ENCODE measurements at regions of chrX and their contacts with region 1.

Region 1: DNA sequence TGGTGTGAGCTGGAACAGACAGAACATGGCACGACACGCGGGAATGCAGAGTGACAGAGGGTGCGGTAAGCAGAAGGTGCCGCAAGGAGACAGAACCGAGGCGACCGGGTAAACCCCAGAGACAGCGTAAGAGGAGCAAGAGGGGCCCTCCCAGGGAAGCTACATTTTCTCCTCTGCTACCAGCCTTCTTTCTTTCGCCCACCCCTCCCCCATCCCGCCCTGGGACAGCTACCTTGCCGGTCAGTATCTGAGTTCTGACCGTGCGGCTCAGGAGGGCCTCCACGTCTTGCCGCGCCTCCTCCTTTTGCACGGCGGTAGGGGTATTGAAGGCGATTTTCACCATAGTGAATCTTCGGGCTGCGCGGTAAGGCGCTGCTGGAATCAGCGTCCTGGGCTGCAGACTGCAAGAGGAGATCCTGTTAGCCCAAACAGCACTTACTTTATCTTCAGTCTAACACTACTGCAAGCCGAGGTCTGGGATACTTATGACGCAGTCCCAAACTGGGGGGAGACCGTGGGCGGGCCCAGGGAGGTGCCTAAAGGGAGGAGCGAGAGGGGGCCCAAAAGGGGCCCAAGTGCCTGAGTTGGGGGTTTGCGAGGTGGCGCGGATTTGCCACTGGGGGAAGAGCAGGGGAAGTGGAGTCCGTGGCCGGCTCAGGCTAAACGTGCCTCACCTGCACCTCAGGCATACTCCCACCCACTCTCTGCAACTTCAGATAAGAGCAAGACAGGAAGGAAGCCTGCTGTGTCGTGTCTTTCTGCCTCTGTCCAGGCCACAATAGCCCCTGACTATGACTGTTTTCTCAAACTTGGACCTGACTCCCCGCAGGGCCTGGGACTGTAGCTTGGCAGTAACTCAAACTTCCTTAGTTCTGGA is at the start of gene ITM2A:
- DNase-seq: peak; percentile 34
- H3K4me3 Mint-ChIP-seq: peak within 1 kb of the TSS; percentile 95
- H3K27ac Mint-ChIP-seq: peak within 1 kb of the TSS; percentile 92
- H3K4me1 Mint-ChIP-seq: peaks cover 33% of the 10 kb centered on the region
- H3K27me3 Mint-ChIP-seq: no peaks in the 10 kb centered on the region
- total RNA-seq, gene ITM2A: 138 and 142 TPM in 2 replicates

Region 2: GRCh38 chrX:78321809-78322208 is 1045.3 kb before region 1 on chrX:
- intact Hi-C with region 1: loop called (anchors 10 kb)
- DNase-seq: peak; percentile 38
- H3K4me3 Mint-ChIP-seq: peak overlapping the region; percentile 33
- H3K27ac Mint-ChIP-seq: peak overlapping the region; percentile 89
- H3K4me1 Mint-ChIP-seq: peaks cover 30% of the 10 kb centered on the region
- H3K27me3 Mint-ChIP-seq: no peaks in the 10 kb centered on the region

Region 3: GRCh38 chrX:79096145-79096556 is 271.0 kb before region 1 on chrX:
- intact Hi-C with region 1: loop called (anchors 10 kb)
- DNase-seq: no peak
- H3K4me3 Mint-ChIP-seq: peak overlapping the region; percentile 42
- H3K27ac Mint-ChIP-seq: peak overlapping the region; percentile 93
- H3K4me1 Mint-ChIP-seq: peaks cover 48% of the 10 kb centered on the region
- H3K27me3 Mint-ChIP-seq: no peaks in the 10 kb centered on the region

Region 4: GRCh38 chrX:79167462-79167861 is 199.6 kb before region 1 on chrX:
- intact Hi-C with region 1: loop called (anchors 5 kb)
- DNase-seq: no peak
- H3K4me3 Mint-ChIP-seq: peak overlapping the region; percentile 26
- H3K27ac Mint-ChIP-seq: peak overlapping the region; percentile 91
- H3K4me1 Mint-ChIP-seq: peaks cover 66% of the 10 kb centered on the region
- H3K27me3 Mint-ChIP-seq: no peaks in the 10 kb centered on the region

Region 5: GRCh38 chrX:79288733-79289132 is 78.4 kb before region 1 on chrX:
- intact Hi-C with region 1: no loop called
- DNase-seq: no peak
- H3K4me3 Mint-ChIP-seq: no peak overlapping the region
- H3K27ac Mint-ChIP-seq: no peak overlapping the region
- H3K4me1 Mint-ChIP-seq: peaks cover 31% of the 10 kb centered on the region
- H3K27me3 Mint-ChIP-seq: no peaks in the 10 kb centered on the region

Region 6: DNA sequence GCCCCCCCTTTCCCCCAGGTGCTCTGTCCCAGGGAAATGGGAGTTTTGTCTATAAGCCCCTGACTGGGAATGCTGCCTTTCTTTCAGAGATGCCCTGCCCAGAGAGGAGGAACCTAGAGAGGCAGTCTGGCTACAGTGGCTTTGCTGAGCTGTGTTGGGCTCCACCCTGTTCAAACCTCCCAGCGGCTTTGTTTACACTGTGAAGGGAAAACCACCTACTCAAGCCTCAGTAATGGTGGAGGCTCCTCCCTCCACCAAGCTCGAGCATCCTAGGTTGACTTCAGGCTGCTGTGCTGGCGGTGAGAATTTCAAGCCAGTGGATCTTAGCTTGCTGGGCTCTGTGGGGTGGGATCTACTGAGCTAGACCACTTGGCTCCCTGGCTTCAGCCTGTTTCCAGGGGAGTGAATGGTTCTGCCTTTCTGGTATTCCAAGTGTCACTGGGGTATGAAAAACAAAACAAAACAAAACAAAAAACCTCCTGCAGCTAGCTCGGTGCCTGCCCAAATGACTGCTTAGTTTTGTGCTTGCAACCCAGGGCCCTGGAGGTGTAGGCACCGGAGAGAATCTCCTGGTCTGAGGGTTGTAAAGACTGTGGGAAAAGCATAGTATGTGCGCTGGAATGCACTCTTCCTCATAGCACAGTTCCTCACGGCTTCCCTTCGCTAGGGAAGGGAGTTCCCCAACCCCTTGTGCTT is 41.7 kb before region 1 on chrX:
- intact Hi-C with region 1: no loop called
- DNase-seq: peak; percentile 18
- H3K4me3 Mint-ChIP-seq: peak overlapping the region; percentile 45
- H3K27ac Mint-ChIP-seq: peak overlapping the region; percentile 55
- H3K4me1 Mint-ChIP-seq: peaks cover 10% of the 10 kb centered on the region
- H3K27me3 Mint-ChIP-seq: no peaks in the 10 kb centered on the region

Region 7: DNA sequence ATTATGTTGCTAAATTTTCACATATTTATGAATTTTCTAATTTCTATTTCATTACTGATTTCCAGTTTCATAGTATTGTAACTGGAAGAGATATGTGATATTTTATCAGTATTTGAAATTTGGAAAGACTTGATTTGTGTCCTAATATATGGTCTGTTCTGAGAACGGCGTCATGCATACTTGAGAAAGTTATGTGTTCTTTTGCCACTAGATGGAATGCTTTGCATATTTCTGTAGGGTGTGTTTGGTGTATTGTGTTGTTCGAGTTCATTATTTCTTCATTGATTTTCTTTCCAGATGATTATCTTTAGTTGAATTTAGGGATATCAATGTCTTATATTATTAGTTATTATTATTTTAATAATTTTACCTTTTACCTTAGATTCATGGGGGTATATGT is 110.6 kb after region 1 on chrX:
- intact Hi-C with region 1: no loop called
- DNase-seq: no peak
- H3K4me3 Mint-ChIP-seq: no peak overlapping the region
- H3K27ac Mint-ChIP-seq: no peak overlapping the region
- H3K4me1 Mint-ChIP-seq: no peaks in the 10 kb centered on the region
- H3K27me3 Mint-ChIP-seq: no peaks in the 10 kb centered on the region